Left lung (tissue), 14 donors: ENCODE measurements at regions of chr14 and their contacts with region 1.

Region 1: GRCh38 chr14:49879683-49880204 is 13.1 kb upstream of the ARF6 start:
- DNase-seq: peak in 1 of 4 donors; percentile 49
- ATAC-seq: peak; percentile 95
- H3K4me3 ChIP-seq: no peak overlapping the region
- H3K27ac ChIP-seq: peak overlapping the region in 1 of 2 donors; percentile 26
- H3K4me1 ChIP-seq: peaks cover 0 to 10% of the 10 kb centered on the region in 2 donors
- H3K27me3 ChIP-seq: no peaks in the 10 kb centered on the region
- CTCF ChIP-seq: peak; percentile 48 to 73

Region 2: GRCh38 chr14:50101417-50101816 is 221.7 kb after region 1 on chr14:
- intact Hi-C with region 1: loop called in 1 of 2 experiments (anchors 5 kb)
- DNase-seq: no peak
- ATAC-seq: no peak
- H3K4me3 ChIP-seq: no peak overlapping the region
- H3K27ac ChIP-seq: no peak overlapping the region
- H3K4me1 ChIP-seq: peaks cover 0 to 4% of the 10 kb centered on the region in 2 donors
- H3K27me3 ChIP-seq: no peaks in the 10 kb centered on the region
- CTCF ChIP-seq: no peak

Region 3: GRCh38 chr14:50303744-50304471 is 424.2 kb after region 1 on chr14:
- intact Hi-C with region 1: no loop called
- DNase-seq: peak in 3 of 4 donors; percentile 10 to 66 (median 48)
- ATAC-seq: peak; percentile 95
- H3K4me3 ChIP-seq: no peak overlapping the region
- H3K27ac ChIP-seq: peak overlapping the region in 1 of 2 donors; percentile 7
- H3K4me1 ChIP-seq: peaks cover 0 to 6% of the 10 kb centered on the region in 2 donors
- H3K27me3 ChIP-seq: no peaks in the 10 kb centered on the region
- CTCF ChIP-seq: no peak